ENCODE measurements at regions of chr11 and their contacts with region 1.

Region 1: GRCh38 chr11:31397239-31397834 is 27.7 kb downstream of the DNAJC24 start:
- DNase-seq: peak; percentile 18
- ATAC-seq: peak; percentile 56; the same call in 2 of the 3 replicates
- H3K4me3 ChIP-seq: no peak overlapping the region
- H3K27ac ChIP-seq: no peak overlapping the region
- H3K4me1 ChIP-seq: no peaks in the 10 kb centered on the region
- H3K27me3 ChIP-seq: no peaks in the 10 kb centered on the region
- CTCF ChIP-seq: peak; percentile 66
- EP300 ChIP-seq: no peak
- POLR2A ChIP-seq: no peak
- RAD21 ChIP-seq: no peak

Region 2: DNA sequence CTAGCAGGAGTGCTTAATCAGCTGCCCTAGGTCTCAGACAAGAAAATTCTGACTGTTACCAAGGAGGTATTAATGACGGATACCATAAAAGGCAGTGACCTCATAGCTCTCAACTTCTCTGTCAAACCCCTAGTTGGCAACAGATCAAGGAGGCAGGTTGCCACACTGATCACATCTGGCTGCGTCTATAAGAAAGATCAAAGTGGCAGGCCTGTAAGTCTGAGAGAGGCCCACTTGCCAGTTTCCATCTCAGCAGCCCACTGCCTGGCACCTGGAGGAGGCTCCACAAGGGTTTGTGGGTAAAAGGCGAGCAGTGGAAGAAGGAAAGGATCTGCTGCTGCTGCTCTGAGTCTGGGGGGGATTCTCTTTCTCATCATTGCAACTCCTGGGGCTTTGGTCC is 571.6 kb before region 1 on chr11:
- CTCF ChIA-PET with region 1: no interaction called
- POLR2A ChIA-PET with region 1: no interaction called
- in situ Hi-C with region 1: no loop called
- intact Hi-C with region 1: no loop called
- DNase-seq: no peak
- ATAC-seq: no peak
- H3K4me3 ChIP-seq: no peak overlapping the region
- H3K27ac ChIP-seq: no peak overlapping the region
- H3K4me1 ChIP-seq: no peaks in the 10 kb centered on the region
- H3K27me3 ChIP-seq: no peaks in the 10 kb centered on the region
- CTCF ChIP-seq: no peak
- EP300 ChIP-seq: no peak
- POLR2A ChIP-seq: no peak
- RAD21 ChIP-seq: no peak

Region 3: GRCh38 chr11:31958076-31958735 is 560.9 kb after region 1 on chr11:
- CTCF ChIA-PET with region 1: interaction called, 7 read pairs
- POLR2A ChIA-PET with region 1: no interaction called
- in situ Hi-C with region 1: loop called (anchors 10 kb)
- intact Hi-C with region 1: loop called (anchors 1 kb)
- DNase-seq: peak; percentile 15
- ATAC-seq: peak; percentile 95
- H3K4me3 ChIP-seq: no peak overlapping the region
- H3K27ac ChIP-seq: no peak overlapping the region
- H3K4me1 ChIP-seq: no peaks in the 10 kb centered on the region
- H3K27me3 ChIP-seq: peaks cover 0 to 13% of the 10 kb centered on the region in 2 experiments; a peak in 1 of 5 replicates
- CTCF ChIP-seq: peak; percentile 76
- EP300 ChIP-seq: no peak
- POLR2A ChIP-seq: no peak
- RAD21 ChIP-seq: peak; percentile 62

Region 4: GRCh38 chr11:32176223-32176934 is 779.0 kb after region 1 on chr11:
- CTCF ChIA-PET with region 1: interaction called, 4 read pairs
- POLR2A ChIA-PET with region 1: no interaction called
- in situ Hi-C with region 1: loop called (anchors 25 kb)
- intact Hi-C with region 1: loop called (anchors 5 kb)
- DNase-seq: peak; percentile 69
- ATAC-seq: peak; percentile 81
- H3K4me3 ChIP-seq: no peak overlapping the region
- H3K27ac ChIP-seq: no peak overlapping the region
- H3K4me1 ChIP-seq: no peaks in the 10 kb centered on the region
- H3K27me3 ChIP-seq: peaks cover 0 to 19% of the 10 kb centered on the region in 2 experiments; a peak in 4 of 5 replicates
- CTCF ChIP-seq: peak; percentile 84
- EP300 ChIP-seq: no peak
- POLR2A ChIP-seq: no peak
- RAD21 ChIP-seq: peak; percentile 70